ENCODE measurements at regions of chrX and their contacts with region 1.

Region 1: DNA sequence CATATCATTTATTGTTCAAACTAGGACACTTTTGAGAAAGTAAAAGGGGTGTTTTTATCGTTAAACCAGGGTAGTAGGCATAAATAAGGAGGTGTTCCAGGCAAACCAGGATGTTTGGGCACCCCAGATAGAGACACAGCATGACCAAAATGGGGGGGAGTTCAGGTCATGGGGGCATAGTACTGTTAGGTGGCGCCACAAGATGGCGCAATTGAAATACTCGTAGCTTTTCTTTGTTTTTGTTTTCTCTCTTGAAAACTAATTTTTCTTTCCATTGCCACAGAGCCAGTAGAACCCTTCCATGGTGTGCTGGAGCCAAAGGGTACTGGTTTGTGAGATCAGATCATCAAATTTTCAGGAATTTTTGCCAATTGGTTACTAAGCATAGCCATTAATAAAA is 283.4 kb downstream of the BCOR start:
- DNase-seq: no peak
- H3K4me3 ChIP-seq: no peak overlapping the region
- H3K27ac ChIP-seq: no peak overlapping the region
- H3K4me1 ChIP-seq: peaks cover 7% of the 10 kb centered on the region
- H3K27me3 ChIP-seq: peaks cover 4% of the 10 kb centered on the region
- CTCF ChIP-seq: peak; percentile 26 to 49

Region 2: GRCh38 chrX:38960137-38960536 is 854.3 kb before region 1 on chrX:
- CTCF ChIA-PET with region 1: no interaction called
- dilution Hi-C with region 1: no loop called
- in situ Hi-C with region 1: no loop called
- intact Hi-C with region 1: loop called (anchors 5 kb)
- DNase-seq: no peak
- H3K4me3 ChIP-seq: no peak overlapping the region
- H3K27ac ChIP-seq: no peak overlapping the region
- H3K4me1 ChIP-seq: no peaks in the 10 kb centered on the region
- H3K27me3 ChIP-seq: no peaks in the 10 kb centered on the region
- CTCF ChIP-seq: no peak

Region 3: DNA sequence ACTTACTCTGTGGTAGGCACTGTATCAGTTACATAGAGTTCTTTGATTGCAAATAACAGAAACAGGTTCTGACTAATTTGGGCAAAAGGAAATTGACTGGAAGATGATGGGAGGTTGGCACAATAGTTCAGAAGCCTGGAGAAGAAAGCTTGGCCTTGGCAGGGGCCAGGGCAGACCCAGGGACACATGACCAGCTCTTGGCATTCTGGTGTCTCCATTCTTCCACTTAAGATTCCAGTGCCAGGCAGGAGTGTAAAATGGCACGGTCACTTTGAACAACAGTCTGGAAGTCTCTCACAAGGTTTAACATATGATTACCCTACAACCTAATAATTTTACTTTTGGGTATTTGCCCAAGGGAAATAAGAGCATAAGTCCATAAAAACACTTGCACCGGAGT is 107.4 kb after region 1 on chrX:
- CTCF ChIA-PET with region 1: no interaction called
- dilution Hi-C with region 1: no loop called
- in situ Hi-C with region 1: no loop called
- intact Hi-C with region 1: no loop called
- DNase-seq: no peak
- H3K4me3 ChIP-seq: no peak overlapping the region
- H3K27ac ChIP-seq: no peak overlapping the region
- H3K4me1 ChIP-seq: no peaks in the 10 kb centered on the region
- H3K27me3 ChIP-seq: no peaks in the 10 kb centered on the region
- CTCF ChIP-seq: no peak

Region 4: GRCh38 chrX:40013266-40014195 is 199.1 kb after region 1 on chrX:
- CTCF ChIA-PET with region 1: no interaction called
- dilution Hi-C with region 1: no loop called
- in situ Hi-C with region 1: no loop called
- intact Hi-C with region 1: loop called (anchors 5 kb)
- DNase-seq: peak; percentile 58
- H3K4me3 ChIP-seq: peak overlapping the region; percentile 42 to 47 (median 46)
- H3K27ac ChIP-seq: peak overlapping the region; percentile 24
- H3K4me1 ChIP-seq: peaks cover 7% of the 10 kb centered on the region
- H3K27me3 ChIP-seq: peaks cover 13% of the 10 kb centered on the region
- CTCF ChIP-seq: no peak

Region 5: GRCh38 chrX:40097497-40098263 is 283.3 kb after region 1 on chrX and contains the start of gene BCOR:
- CTCF ChIA-PET with region 1: no interaction called
- dilution Hi-C with region 1: no loop called
- in situ Hi-C with region 1: no loop called
- intact Hi-C with region 1: loop called (anchors 5 kb)
- DNase-seq: peak; percentile 63
- H3K4me3 ChIP-seq: peak within 1 kb of the TSS; percentile 48 to 64 (median 62)
- H3K27ac ChIP-seq: peak within 1 kb of the TSS; percentile 22
- H3K4me1 ChIP-seq: peaks cover 24% of the 10 kb centered on the region
- H3K27me3 ChIP-seq: peaks cover 23% of the 10 kb centered on the region
- CTCF ChIP-seq: no peak
- total RNA-seq, gene BCOR: 7.2 to 9.2 TPM

Region 6: DNA sequence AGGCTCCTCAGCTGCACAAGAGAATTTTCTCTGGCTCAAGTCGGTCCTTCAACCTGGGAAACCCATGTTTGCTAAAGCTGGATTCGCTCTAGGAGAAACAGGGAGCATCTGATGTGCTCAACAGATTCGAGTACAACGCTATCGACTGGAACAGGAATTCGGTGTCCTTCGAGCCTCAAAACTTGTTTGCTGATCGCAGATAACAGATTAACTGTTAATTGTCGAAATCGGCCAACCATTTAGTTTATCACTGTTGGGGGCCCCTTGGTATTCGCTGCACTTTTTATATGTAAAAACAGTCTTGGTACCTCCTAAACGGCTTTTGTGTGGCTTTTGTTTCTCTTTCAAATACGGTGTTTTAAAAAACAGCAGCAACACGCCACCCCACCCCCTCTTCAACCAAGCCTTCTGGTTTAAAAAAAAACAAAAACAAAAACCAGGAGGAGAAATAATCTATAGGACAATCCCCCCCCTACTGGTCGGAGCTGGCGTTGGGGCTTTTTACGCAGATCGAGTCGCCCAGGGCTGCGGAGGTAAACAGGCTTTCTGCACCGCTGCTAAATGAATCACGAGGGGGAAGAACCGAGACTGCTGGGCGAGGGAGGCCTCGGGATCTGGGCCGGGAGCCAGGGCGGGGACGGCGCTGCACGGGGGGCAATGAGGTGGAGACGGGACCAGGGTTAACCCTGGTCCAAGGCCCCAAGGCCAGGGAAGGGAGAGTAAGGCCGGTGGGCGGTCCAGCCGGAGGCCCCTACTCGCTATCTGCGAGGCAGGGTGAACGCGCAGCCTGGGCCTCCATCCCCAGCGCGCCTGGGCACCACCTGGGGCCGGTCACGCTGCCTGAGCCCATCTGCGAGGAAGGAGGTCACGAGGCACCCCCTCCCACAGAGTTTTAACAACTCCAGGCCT is 355.1 kb after region 1 on chrX:
- CTCF ChIA-PET with region 1: no interaction called
- dilution Hi-C with region 1: no loop called
- in situ Hi-C with region 1: loop called in 1 of 2 experiments (anchors 25 kb)
- intact Hi-C with region 1: no loop called
- DNase-seq: no peak
- H3K4me3 ChIP-seq: no peak overlapping the region
- H3K27ac ChIP-seq: no peak overlapping the region
- H3K4me1 ChIP-seq: peaks cover 9% of the 10 kb centered on the region
- H3K27me3 ChIP-seq: peaks cover 64% of the 10 kb centered on the region
- CTCF ChIP-seq: peak in 1 of 2 donors; percentile 7

Measured in mammary epithelial cell (primary cell).